ENCODE measurements at regions of chr9 and their contacts with region 1.

Region 1: GRCh38 chr9:136439550-136440408 is at the start of gene INPP5E:
- DNase-seq: peak; percentile 21 to 98
- H3K4me3 ChIP-seq: peak within 1 kb of the TSS; percentile 74 to 89 (median 76)
- H3K27ac ChIP-seq: no peak within 1 kb of the TSS; the same call in 1 of the 2 replicates
- H3K4me1 ChIP-seq: peaks cover 0 to 7% (median 3%) of the 10 kb centered on the region in 4 experiments; a peak in 1 of 7 replicates
- H3K27me3 ChIP-seq: peaks cover 0 to 2% (median 0%) of the 10 kb centered on the region in 4 experiments; a peak in 2 of 7 replicates
- CTCF ChIP-seq: peak in 2 of 3 experiments; percentile 66 to 73; a peak in 3 of 4 replicates
- EP300 ChIP-seq: no peak
- POLR2A ChIP-seq: peak in 1 of 2 experiments; percentile 59; a peak in 1 of 3 replicates
- RAD21 ChIP-seq: no peak
- total RNA-seq, gene INPP5E: 11.3 and 11.5 TPM in 2 replicates

Region 2: DNA sequence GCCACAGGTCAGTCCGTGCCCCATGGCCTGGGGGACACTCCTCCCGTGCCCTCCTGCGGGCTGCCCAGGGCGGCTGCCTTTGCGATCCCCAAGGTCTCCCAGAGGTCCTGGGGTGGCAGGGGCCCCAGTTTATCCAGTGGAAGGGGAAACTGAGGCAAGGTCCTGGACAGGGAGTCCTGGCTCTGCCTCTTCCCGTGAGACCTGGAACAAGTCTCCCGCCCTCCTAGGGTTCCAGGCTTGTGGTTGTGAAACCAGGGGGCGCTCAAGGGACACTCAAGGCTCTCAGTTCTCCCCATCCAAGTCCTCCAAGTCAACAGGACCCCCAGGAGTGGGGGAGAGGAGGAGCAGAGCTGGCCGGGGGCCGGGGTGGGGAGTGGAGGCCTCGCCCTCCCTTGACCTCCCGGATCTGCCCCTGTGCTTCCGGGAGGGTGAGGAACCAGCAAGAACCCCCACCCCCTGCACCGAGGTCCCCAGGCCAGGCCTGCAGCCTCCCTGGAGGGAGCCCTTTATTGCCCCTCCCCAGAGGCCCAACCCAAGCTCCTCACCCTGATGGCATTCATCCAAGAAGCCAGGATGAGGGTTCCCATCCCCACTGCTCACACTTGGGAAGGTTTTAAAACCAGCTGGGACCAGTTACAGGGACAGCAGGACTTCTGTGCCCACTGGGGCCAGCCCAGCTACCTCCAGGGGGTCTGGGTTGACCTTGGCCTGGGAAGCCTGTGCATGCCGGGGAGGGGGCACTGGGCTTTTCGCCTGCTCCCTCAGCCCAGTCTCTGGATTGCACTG is 296.4 kb before region 1 on chr9:
- CTCF ChIA-PET with region 1: no interaction called
- POLR2A ChIA-PET with region 1: no interaction called
- DNase-seq: peak in 1 of 2 experiments; percentile 86
- H3K4me3 ChIP-seq: peak overlapping the region in 1 of 4 experiments; percentile 41; a peak in 1 of 8 replicates
- H3K27ac ChIP-seq: no peak overlapping the region
- H3K4me1 ChIP-seq: peaks cover 3 to 28% (median 17%) of the 10 kb centered on the region in 4 experiments
- H3K27me3 ChIP-seq: no peaks in the 10 kb centered on the region; a peak in 2 of 7 replicates
- CTCF ChIP-seq: peak in 2 of 3 experiments; percentile 69 to 72; a peak in 3 of 4 replicates
- EP300 ChIP-seq: no peak
- POLR2A ChIP-seq: no peak
- RAD21 ChIP-seq: peak; percentile 66 to 83

Region 3: GRCh38 chr9:136372561-136373299 is 67.0 kb before region 1 on chr9:
- CTCF ChIA-PET with region 1: interaction called, 4 read pairs
- POLR2A ChIA-PET with region 1: interaction called, 15 read pairs
- DNase-seq: no peak
- H3K4me3 ChIP-seq: no peak overlapping the region
- H3K27ac ChIP-seq: no peak overlapping the region; the same call in 1 of the 2 replicates
- H3K4me1 ChIP-seq: no peaks in the 10 kb centered on the region
- H3K27me3 ChIP-seq: no peaks in the 10 kb centered on the region
- CTCF ChIP-seq: no peak
- EP300 ChIP-seq: no peak
- POLR2A ChIP-seq: no peak
- RAD21 ChIP-seq: 0 out of 4 replicates have a peak, but pooled peaks of 1 of the 2 experiments have one; percentile 1

Region 4: GRCh38 chr9:136424750-136425362 is 14.9 kb before region 1 on chr9:
- CTCF ChIA-PET with region 1: interaction called, 12 read pairs
- POLR2A ChIA-PET with region 1: interaction called, 22 read pairs
- DNase-seq: no peak
- H3K4me3 ChIP-seq: no peak overlapping the region
- H3K27ac ChIP-seq: no peak overlapping the region
- H3K4me1 ChIP-seq: no peaks in the 10 kb centered on the region
- H3K27me3 ChIP-seq: no peaks in the 10 kb centered on the region
- CTCF ChIP-seq: no peak
- EP300 ChIP-seq: no peak
- POLR2A ChIP-seq: no peak
- RAD21 ChIP-seq: no peak

Region 5: GRCh38 chr9:136455043-136456002 is 15.5 kb after region 1 on chr9:
- CTCF ChIA-PET with region 1: interaction called, 9 read pairs
- POLR2A ChIA-PET with region 1: interaction called, 10 read pairs
- DNase-seq: no peak
- H3K4me3 ChIP-seq: no peak overlapping the region
- H3K27ac ChIP-seq: no peak overlapping the region
- H3K4me1 ChIP-seq: no peaks in the 10 kb centered on the region
- H3K27me3 ChIP-seq: no peaks in the 10 kb centered on the region
- CTCF ChIP-seq: no peak
- EP300 ChIP-seq: no peak
- POLR2A ChIP-seq: no peak
- RAD21 ChIP-seq: no peak

Region 6: GRCh38 chr9:136474974-136475865 is 35.4 kb after region 1 on chr9:
- CTCF ChIA-PET with region 1: interaction called, 4 read pairs
- POLR2A ChIA-PET with region 1: interaction called, 12 read pairs
- DNase-seq: no peak
- H3K4me3 ChIP-seq: no peak overlapping the region
- H3K27ac ChIP-seq: no peak overlapping the region
- H3K4me1 ChIP-seq: no peaks in the 10 kb centered on the region
- H3K27me3 ChIP-seq: no peaks in the 10 kb centered on the region
- CTCF ChIP-seq: no peak
- EP300 ChIP-seq: no peak
- POLR2A ChIP-seq: no peak
- RAD21 ChIP-seq: no peak

Region 7: GRCh38 chr9:136488247-136489214 is 48.8 kb after region 1 on chr9:
- CTCF ChIA-PET with region 1: interaction called, 10 read pairs
- POLR2A ChIA-PET with region 1: no interaction called
- DNase-seq: peak; percentile 23 to 94
- H3K4me3 ChIP-seq: no peak overlapping the region
- H3K27ac ChIP-seq: no peak overlapping the region
- H3K4me1 ChIP-seq: peaks cover 0 to 7% (median 2%) of the 10 kb centered on the region in 4 experiments; a peak in 5 of 7 replicates
- H3K27me3 ChIP-seq: no peaks in the 10 kb centered on the region
- CTCF ChIP-seq: peak in 2 of 3 experiments; percentile 94 to 95; a peak in 3 of 4 replicates
- EP300 ChIP-seq: no peak
- POLR2A ChIP-seq: no peak
- RAD21 ChIP-seq: peak; percentile 94 to 95